ENCODE measurements at regions of chr9 and their contacts with region 1.

Region 1: GRCh38 chr9:129482521-129483414 is 138.1 kb downstream of the C9orf50 start:
- DNase-seq: peak; percentile 93
- H3K27ac ChIP-seq: peak overlapping the region; percentile 100
- CTCF ChIP-seq: no peak

Region 2: DNA sequence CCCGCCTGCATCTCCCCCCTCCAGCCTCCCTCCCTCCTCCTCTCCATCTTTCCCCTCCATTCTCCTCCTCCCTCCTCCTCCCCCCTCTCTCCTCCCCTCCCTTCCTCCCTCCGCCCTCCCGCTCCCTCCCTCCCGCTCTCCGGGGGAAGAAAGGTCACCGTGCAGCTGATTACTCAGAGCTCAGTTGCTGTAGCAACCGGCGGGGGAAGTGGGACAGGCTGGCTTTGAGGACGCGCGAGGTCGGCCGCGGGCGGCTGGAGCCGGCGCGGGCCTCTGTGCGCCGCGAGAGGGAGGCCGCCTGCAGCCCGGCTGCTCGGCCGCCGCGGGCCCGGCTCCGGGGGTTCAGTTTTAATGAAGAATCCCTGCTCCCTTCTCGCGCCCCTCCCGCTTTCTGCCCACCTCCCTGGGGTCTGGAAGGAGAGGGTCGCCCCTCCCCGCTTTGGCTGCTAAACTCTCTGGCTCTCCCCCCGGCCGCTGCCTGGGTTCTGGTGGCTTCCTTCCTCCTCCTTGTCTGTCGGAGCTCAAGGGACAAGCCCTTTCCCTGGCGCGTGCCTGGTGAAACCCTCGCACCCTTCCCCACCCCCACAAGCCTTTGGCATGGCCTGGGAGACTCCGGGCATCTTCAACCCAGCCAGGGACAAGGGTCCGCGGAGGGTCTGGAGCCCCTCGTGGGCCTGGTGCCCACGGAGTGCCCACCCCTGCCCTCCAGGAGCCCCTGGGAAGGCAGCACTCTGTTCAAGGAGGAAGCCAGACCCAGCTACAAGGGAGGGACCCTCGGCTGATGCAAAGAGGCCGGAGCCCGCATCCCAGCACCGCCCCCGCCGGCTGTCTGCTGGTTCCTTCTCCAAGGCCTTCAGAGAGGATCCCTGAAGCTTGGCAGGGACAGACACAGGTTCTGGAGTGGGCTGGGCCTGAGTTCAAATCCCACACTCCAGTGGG is 22.2 kb before region 1 on chr9:
- CTCF ChIA-PET with region 1: interaction called, 10 read pairs
- POLR2A ChIA-PET with region 1: interaction called, 12 read pairs
- DNase-seq: peak; percentile 100
- H3K27ac ChIP-seq: peak overlapping the region; percentile 91
- CTCF ChIP-seq: no peak

Region 3: GRCh38 chr9:129495534-129496325 is 13.0 kb after region 1 on chr9:
- CTCF ChIA-PET with region 1: interaction called, 4 read pairs
- POLR2A ChIA-PET with region 1: interaction called, 16 read pairs
- DNase-seq: peak; percentile 99
- H3K27ac ChIP-seq: peak overlapping the region; percentile 100
- CTCF ChIP-seq: no peak

Region 4: GRCh38 chr9:129569502-129570449 is 87.0 kb after region 1 on chr9:
- CTCF ChIA-PET with region 1: no interaction called
- POLR2A ChIA-PET with region 1: no interaction called
- DNase-seq: no peak
- H3K27ac ChIP-seq: peak overlapping the region; percentile 63
- CTCF ChIP-seq: no peak

Region 5: DNA sequence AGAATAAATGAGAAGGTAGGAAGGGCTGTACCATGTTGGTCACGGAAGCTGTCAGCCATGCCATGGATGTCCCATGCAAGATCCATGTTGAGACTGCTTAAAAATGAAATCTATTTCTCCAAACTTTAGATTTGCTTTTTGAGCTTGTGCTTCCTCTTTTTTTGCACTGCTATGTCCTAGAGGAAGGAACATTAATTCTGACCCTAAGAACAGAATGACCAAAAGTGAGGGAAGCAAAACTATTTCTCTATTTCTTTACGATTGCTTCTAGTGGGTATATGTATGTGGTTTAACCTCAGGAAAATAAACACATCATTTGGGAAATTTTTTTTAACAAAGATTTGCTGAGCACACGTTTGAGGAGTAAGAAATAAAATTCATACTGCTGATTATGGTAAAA is 437.1 kb after region 1 on chr9:
- CTCF ChIA-PET with region 1: no interaction called
- POLR2A ChIA-PET with region 1: no interaction called
- DNase-seq: no peak
- H3K27ac ChIP-seq: no peak overlapping the region
- CTCF ChIP-seq: no peak

Region 6: DNA sequence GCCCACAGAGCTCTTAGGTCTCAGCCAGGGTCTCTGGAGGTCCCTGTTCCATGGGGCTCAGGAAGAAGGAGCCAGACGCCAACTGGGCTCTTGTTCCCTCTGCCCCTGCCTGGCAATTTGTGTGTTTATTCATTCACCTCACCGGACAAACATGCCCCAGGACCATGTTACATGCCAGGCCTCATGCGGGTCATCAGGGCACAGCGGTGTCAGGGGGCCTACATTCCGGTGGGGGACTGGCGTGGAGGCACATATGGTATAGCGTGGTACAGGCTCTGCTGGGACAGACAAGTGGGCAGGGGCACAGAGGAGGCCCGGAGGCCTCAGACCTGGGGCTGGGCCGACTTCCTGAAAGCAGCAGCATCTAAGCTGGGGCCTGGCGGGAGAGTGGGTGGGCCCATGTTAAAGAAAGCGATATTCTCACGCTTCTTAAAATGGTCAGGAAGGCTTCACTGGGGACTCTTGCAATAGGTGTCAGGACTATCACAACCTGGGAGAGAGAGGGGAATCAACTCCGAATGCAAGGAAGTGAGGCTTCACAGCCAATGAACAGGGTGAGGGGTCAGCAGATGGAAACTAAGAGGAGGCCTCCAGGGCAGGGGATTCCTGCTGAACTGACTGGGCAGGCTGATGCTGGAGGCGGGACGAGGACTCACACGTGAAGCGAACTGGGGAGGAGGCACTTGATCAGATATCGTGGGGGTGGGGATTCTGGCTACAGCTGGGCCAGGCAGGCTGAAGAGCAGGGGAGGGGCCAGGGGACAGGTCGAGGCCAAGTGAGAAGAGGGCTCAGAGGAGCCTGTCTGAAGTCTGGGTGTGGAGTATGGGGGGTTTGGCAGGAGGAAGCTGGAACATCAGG is 731.4 kb after region 1 on chr9:
- CTCF ChIA-PET with region 1: no interaction called
- POLR2A ChIA-PET with region 1: no interaction called
- DNase-seq: no peak
- H3K27ac ChIP-seq: peak overlapping the region; percentile 72
- CTCF ChIP-seq: no peak